Activated naive CD4-positive, alpha-beta T cell treated with anti-CD3 and anti-CD28 coated beads for 36 hours (primary cell): ENCODE measurements at regions of chr4 and their contacts with region 1.

Region 1: DNA sequence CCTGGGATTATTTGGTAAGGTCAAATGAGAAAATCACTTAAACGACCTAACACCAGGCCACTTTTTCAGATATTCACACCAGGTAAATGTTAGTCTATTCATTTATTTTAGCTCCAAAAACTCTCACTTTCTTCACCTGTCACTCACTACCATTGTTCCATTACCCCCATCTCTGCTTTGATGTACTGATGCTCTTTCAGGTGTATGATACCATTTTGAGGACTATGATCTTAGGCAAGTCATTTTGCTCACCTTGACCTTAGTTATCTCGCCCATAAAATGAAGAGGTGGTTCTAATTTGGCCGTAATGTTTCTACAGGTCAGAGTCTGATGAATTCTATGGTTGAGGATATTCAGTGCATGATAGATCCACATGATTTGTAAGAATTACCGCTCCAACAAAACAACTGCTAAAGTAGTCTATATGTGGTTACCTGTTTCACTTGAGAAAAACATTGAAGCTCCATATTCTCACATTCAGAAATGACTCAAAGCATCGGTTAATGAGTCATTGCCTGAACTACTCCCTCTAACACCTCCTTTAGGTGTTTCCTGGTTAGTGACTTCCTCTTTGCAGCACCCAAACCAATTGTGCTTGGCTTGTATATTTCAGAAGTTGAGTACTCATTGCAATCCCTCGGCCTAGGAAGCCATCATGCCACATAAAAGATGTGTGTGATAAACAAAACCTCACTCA is 4.5 kb downstream of the DTHD1 start:
- DNase-seq: peak; percentile 79
- H3K4me3 Mint-ChIP-seq: peak overlapping the region; percentile 22
- H3K27ac Mint-ChIP-seq: peak overlapping the region; percentile 85
- H3K4me1 Mint-ChIP-seq: peaks cover 32% of the 10 kb centered on the region
- H3K27me3 Mint-ChIP-seq: no peaks in the 10 kb centered on the region

Region 2: GRCh38 chr4:36081185-36081584 is 204.7 kb before region 1 on chr4:
- CTCF ChIA-PET with region 1: no interaction called
- intact Hi-C with region 1: loop called (anchors 1 kb)
- DNase-seq: peak; percentile 48
- H3K4me3 Mint-ChIP-seq: no peak overlapping the region
- H3K27ac Mint-ChIP-seq: no peak overlapping the region
- H3K4me1 Mint-ChIP-seq: peaks cover 2% of the 10 kb centered on the region
- H3K27me3 Mint-ChIP-seq: no peaks in the 10 kb centered on the region

Region 3: DNA sequence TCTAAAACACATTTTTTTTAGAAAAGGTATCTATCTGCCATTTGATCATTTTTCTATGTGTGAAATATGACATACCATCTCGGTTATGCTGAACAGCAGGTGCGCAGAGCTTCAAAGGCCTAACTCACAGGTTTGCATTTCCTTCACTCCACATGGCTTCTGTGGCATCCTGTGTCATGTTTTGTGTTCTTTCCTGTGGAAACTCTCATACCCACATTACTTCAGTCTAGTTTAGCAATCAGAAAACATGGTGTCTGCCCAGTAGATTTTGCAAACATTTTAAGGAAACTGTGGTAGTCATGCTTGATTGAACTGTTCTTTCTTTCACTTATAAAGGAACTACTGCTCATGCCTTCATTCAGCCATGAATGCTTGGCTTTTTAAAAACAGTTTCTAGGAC is 30.4 kb before region 1 on chr4:
- CTCF ChIA-PET with region 1: interaction called, 3 read pairs
- intact Hi-C with region 1: loop called (anchors 1 kb)
- DNase-seq: peak; percentile 81
- H3K4me3 Mint-ChIP-seq: peak overlapping the region; percentile 41
- H3K27ac Mint-ChIP-seq: peak overlapping the region; percentile 90
- H3K4me1 Mint-ChIP-seq: peaks cover 30% of the 10 kb centered on the region
- H3K27me3 Mint-ChIP-seq: no peaks in the 10 kb centered on the region

Region 4: GRCh38 chr4:36316607-36317006 is 30.7 kb after region 1 on chr4:
- CTCF ChIA-PET with region 1: interaction called, 7 read pairs
- intact Hi-C with region 1: loop called (anchors 1 kb)
- DNase-seq: peak; percentile 22
- H3K4me3 Mint-ChIP-seq: no peak overlapping the region
- H3K27ac Mint-ChIP-seq: peak overlapping the region; percentile 80
- H3K4me1 Mint-ChIP-seq: peaks cover 48% of the 10 kb centered on the region
- H3K27me3 Mint-ChIP-seq: no peaks in the 10 kb centered on the region

Region 5: DNA sequence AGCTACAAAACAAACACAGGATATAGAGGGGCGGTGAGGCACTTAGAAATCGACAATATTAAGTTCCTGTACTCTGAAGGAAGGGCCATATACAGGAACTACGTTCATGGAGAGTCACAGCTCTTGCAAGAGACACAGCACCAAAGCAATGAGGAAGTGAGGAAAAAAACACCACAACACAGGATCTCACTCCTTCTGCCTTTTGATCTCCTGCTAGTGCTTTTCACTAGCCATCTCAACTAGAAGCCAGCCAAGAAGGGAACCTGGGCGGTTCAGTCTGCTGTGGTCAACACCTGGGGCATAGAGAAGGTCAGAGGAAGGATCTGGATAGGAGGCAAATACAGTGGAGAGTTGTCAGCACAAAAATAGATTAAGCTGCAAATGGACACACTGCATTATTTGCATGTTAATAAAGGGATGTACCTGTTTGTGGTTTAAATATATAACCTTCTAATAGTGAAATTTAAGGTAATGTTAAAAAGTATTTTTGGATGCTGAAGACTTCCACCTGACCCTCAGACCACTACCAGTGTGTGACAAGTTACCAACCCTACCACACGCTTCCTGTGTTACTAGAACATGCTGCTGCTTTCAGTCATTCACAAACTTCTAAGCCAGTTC is 100.1 kb after region 1 on chr4:
- CTCF ChIA-PET with region 1: no interaction called
- intact Hi-C with region 1: loop called (anchors 1 kb)
- DNase-seq: peak; percentile 51
- H3K4me3 Mint-ChIP-seq: no peak overlapping the region
- H3K27ac Mint-ChIP-seq: peak overlapping the region; percentile 60
- H3K4me1 Mint-ChIP-seq: peaks cover 26% of the 10 kb centered on the region
- H3K27me3 Mint-ChIP-seq: no peaks in the 10 kb centered on the region

Region 6: DNA sequence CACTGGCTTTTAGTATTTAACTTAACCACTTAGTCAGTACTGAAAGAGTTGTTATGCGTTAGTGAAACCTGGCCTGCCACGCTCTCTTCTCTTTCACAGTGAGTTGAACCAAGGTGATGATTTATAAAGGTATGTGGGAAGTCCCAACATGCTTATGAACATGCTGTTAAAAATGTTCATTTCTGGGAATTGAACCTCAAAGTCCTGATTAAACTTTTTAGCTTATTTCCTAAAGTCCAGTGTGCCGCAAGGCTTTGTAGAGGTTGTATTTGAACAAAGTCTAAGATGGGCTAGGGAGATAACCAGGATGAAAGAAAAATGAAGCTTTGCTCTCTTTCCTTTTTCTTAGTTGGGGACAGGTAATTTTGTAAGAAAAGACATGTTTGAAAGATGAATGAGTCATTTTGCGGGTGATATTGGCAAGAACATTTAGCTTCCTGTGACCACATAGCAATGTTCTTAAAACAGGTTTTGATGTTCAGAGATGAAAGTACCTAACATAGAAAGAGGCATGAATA is 265.8 kb after region 1 on chr4:
- CTCF ChIA-PET with region 1: no interaction called
- intact Hi-C with region 1: loop called (anchors 1 kb)
- DNase-seq: peak; percentile 64
- H3K4me3 Mint-ChIP-seq: no peak overlapping the region
- H3K27ac Mint-ChIP-seq: peak overlapping the region; percentile 79
- H3K4me1 Mint-ChIP-seq: peaks cover 10% of the 10 kb centered on the region
- H3K27me3 Mint-ChIP-seq: peaks cover 2% of the 10 kb centered on the region